Posterior vena cava (tissue), 2 donors: ENCODE measurements at regions of chr7 and their contacts with region 1.

Region 1: DNA sequence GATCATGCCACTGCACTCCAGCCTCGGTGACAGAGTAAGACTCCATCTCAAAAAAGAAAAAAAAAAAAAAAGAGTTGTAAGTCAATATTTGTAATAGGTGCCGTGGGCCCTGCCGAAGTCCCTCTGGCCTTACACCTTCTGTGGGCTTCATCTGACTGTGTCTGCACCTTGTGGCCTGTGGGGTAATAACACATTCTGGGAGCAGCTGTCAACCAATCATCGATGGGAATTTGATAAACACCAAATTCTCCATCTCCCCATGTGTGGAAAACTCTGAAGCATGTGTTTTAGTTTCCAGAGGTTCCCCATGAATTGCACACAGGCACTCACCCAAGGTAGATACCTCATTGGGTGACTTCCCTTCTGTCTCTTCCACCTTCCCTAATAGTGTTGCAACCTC is 10.8 kb downstream of the ZNF394 start:
- DNase-seq: no peak

Region 2: DNA sequence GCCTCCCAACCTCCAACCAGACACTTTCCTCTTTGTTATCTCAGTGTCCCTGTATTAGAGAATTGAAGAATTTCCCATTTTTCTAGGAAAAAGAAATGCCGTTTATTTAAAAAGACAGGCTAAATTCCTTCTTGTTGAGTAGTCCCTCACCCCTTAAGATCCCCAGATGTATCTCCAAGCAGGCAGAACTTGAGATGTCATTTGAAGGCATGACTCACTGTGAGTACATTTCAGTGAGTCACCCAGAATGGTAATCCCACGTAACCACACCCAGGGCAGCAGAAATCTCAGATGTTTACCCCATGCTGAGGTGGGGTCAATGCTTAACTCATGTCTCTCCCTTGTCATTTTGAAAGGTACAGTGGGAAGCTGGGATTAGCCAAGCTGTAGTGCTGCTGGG is 73.6 kb after region 1 on chr7:
- intact Hi-C with region 1: loop called in 1 of 2 experiments (anchors 10 kb)
- DNase-seq: no peak